WTC11 (cell line): ENCODE measurements at regions of chr2 and their contacts with region 1.

Region 1: DNA sequence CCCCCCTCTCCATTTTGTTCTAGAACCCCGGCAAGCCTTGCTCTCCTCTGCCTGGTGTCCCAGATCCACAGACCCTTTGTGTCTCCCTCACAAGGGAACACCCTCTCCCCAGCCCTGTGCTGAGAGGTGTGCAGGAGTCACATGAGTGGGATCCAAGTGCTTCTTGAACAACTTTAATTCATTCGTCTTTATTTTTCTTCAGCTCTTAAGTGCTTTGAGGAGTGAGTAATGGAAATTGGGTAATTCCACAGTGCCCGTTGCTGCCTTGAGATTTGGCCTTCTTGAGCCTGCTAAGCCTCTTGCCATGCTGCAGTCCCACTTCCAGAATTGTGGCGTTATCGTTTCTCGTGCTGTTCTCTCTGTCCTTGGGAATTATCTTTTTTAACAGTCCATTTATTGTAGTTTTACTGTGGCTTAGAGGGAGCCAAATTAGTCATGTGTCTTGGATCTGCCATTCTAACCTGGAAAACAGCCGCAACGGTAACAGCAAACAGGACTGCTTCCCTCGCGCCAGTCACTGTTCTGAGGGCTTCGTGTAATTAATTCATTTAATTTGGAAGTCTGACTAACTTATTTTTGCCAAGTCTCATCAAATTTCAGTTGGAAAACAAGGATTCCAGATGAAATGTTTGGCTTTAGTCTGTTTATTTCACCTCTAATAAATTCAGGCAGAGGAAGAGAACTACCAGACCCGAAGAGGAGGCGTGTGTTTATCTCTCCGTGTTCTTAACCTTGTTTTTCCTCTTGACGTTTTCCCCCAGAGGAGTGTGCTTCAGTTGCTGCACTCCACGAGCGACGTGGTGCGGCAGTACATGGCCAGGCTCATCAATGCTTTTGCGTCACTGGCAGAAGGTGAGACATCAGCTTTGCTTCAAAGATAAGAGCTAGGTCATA is 72.0 kb downstream of the ARMC9 start:
- DNase-seq: no peak
- ATAC-seq: no peak
- H3K4me3 Mint-ChIP-seq: no peak overlapping the region
- H3K27ac Mint-ChIP-seq: peak overlapping the region; percentile 60
- H3K4me1 Mint-ChIP-seq: peaks cover 3% of the 10 kb centered on the region; the same call in 1 of the 2 replicates
- H3K27me3 Mint-ChIP-seq: no peaks in the 10 kb centered on the region
- CTCF ChIP-seq: no peak

Region 2: GRCh38 chr2:231259104-231259503 is 11.4 kb before region 1 on chr2:
- CTCF ChIA-PET with region 1: no interaction called
- POLR2A ChIA-PET with region 1: no interaction called
- DNase-seq: no peak
- ATAC-seq: no peak
- H3K4me3 Mint-ChIP-seq: no peak overlapping the region
- H3K27ac Mint-ChIP-seq: peak overlapping the region; percentile 45; the same call in 1 of the 2 replicates
- H3K4me1 Mint-ChIP-seq: peaks cover 6% of the 10 kb centered on the region
- H3K27me3 Mint-ChIP-seq: no peaks in the 10 kb centered on the region
- CTCF ChIP-seq: no peak

Region 3: DNA sequence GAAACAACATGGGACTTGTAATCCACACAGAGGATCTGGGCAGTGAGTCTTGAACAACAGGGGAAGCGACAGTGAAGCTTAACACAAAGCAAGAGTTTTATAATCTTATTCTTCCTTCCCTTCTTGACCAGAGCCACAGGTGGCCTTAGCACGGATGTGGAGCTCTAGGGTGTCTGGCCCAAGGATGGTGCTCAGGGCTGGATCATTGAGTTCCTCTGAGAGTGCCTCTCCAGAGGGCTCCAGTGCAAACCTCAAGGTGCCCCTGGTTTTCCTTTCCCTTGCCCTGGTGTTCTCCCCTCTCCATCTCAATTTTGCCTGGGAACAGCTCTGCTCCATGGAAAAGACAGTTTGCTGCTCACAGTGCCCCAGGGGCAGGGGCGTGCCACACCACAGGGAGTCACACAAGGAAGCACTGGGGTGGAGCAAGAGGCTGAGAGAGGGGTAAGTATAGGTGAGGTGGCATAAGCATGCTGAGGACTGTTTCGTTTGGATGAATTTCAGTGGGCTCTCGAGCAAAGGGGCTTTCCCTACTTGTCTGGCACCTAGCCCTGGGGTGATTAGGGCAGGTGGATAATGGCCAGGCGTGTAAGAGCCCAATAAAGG is 36.4 kb after region 1 on chr2:
- CTCF ChIA-PET with region 1: no interaction called
- POLR2A ChIA-PET with region 1: no interaction called
- DNase-seq: no peak
- ATAC-seq: peak; percentile 63
- H3K4me3 Mint-ChIP-seq: no peak overlapping the region
- H3K27ac Mint-ChIP-seq: 0 out of 2 replicates have a peak overlapping the region, but pooled peaks have one; percentile 20
- H3K4me1 Mint-ChIP-seq: peaks cover 11% of the 10 kb centered on the region
- H3K27me3 Mint-ChIP-seq: no peaks in the 10 kb centered on the region
- CTCF ChIP-seq: no peak

Region 4: DNA sequence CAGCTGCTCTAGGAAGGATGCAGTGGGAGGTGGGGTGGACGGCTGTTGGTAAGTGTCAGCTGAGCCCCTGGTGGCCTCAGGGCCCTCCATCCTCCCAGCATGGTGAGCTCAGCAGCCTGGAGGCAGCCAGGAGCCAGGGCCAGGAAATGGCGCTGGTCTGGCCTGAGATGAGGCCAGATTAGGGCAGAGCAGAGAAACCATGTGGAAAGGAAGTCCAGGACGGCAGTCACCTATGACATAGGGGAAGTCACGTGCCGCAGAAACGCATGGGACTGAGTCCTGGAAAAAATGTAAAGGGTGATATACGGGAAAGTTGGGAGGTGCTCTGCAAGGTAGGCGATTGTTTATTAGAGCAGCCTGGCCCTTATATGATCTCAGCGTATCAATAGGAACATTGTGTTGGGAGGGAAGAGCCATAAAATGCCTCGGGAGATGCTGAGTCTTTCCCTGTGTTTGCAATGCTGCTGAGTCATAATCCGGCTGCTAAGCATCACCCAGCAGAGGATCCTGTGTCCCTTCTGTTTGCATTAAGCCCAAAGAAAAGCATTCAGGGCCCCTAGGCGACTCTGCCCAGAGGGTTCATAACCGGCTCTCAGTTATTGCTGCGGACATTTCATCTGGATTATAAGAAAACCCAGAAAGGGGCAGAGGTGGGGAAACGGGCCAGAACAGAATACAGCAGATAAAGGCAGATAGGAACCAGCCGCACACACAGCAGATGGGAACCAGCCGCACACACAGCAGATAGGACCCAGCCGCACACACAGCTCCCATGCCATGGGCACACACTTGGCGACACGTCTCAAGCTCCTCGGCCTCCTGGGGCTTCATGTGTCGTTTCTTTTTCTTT is 94.7 kb after region 1 on chr2:
- CTCF ChIA-PET with region 1: no interaction called
- POLR2A ChIA-PET with region 1: interaction called, 10 read pairs
- DNase-seq: no peak
- ATAC-seq: peak; percentile 25
- H3K4me3 Mint-ChIP-seq: no peak overlapping the region
- H3K27ac Mint-ChIP-seq: peak overlapping the region; percentile 74
- H3K4me1 Mint-ChIP-seq: peaks cover 58% of the 10 kb centered on the region
- H3K27me3 Mint-ChIP-seq: no peaks in the 10 kb centered on the region
- CTCF ChIP-seq: no peak